ENCODE measurements at regions of chr20 and their contacts with region 1.

Region 1: GRCh38 chr20:50395258-50395729 is 114.9 kb upstream of the PTPN1 start:
- DNase-seq: peak; percentile 97 to 99
- ATAC-seq: peak; percentile 32 to 42
- H3K4me3 ChIP-seq: no peak overlapping the region
- H3K27ac ChIP-seq: peak overlapping the region; percentile 93 to 100 (median 96)
- H3K4me1 ChIP-seq: peaks cover 59 to 66% of the 10 kb centered on the region in 2 donors
- H3K27me3 ChIP-seq: no peaks in the 10 kb centered on the region
- CTCF ChIP-seq: peak in 1 of 5 experiments; percentile 20
- POLR2A ChIP-seq: peak; percentile 81 to 90

Region 2: GRCh38 chr20:50278674-50279531 is 116.4 kb before region 1 on chr20:
- in situ Hi-C with region 1: loop called in 1 of 4 experiments (anchors 25 kb)
- intact Hi-C with region 1: loop called (anchors 5 kb)
- DNase-seq: peak; percentile 91 to 98
- ATAC-seq: peak; percentile 79 to 85
- H3K4me3 ChIP-seq: no peak overlapping the region
- H3K27ac ChIP-seq: peak overlapping the region; percentile 87 to 96 (median 92)
- H3K4me1 ChIP-seq: peaks cover 43 to 50% of the 10 kb centered on the region in 2 donors
- H3K27me3 ChIP-seq: no peaks in the 10 kb centered on the region
- CTCF ChIP-seq: peak; percentile 46 to 54 (median 49)
- POLR2A ChIP-seq: peak; percentile 52 to 63

Region 3: GRCh38 chr20:50308513-50309279 is 86.6 kb before region 1 on chr20:
- in situ Hi-C with region 1: no loop called
- intact Hi-C with region 1: loop called (anchors 1 kb)
- DNase-seq: peak; percentile 79 to 87
- ATAC-seq: peak; percentile 19 to 27
- H3K4me3 ChIP-seq: no peak overlapping the region
- H3K27ac ChIP-seq: peak overlapping the region; percentile 87 to 95 (median 90)
- H3K4me1 ChIP-seq: peaks cover 49 to 53% of the 10 kb centered on the region in 2 donors
- H3K27me3 ChIP-seq: no peaks in the 10 kb centered on the region
- CTCF ChIP-seq: no peak
- POLR2A ChIP-seq: peak; percentile 53 to 67

Region 4: DNA sequence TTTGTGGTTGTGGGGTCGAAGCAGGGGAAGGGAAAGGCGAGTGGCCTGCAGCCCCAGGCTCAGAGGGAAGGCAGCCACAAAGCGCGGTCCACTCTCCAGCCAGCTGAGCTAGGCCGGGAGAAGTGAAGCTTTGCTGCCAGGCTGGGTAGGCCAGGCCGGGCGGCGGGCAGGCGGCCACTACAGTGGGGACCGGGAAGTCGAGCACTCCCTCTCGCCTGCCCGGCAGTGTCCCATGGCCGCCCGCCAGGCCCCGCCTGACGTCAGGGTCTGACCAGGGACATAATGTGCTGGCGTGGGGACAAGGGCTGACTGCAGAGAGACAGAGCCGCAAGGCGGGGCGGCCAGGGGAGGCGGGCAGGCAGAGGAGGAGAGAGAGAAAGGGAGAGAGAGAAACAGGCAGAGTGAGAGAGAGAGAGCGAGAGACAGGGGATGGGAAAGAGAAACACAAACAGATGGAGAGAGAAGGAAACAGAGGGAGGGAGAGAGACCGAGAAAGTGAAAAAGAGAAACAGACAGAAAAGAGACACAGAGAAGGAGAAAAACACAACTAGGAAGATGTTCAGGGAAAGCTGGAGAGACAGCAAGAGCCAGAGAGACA is 20.3 kb after region 1 on chr20:
- in situ Hi-C with region 1: no loop called
- intact Hi-C with region 1: loop called (anchors 1 kb)
- DNase-seq: peak; percentile 100
- ATAC-seq: peak; percentile 82 to 86
- H3K4me3 ChIP-seq: peak overlapping the region; percentile 15 to 28 (median 20)
- H3K27ac ChIP-seq: peak overlapping the region; percentile 99
- H3K4me1 ChIP-seq: peaks cover 47 to 54% of the 10 kb centered on the region in 2 donors
- H3K27me3 ChIP-seq: no peaks in the 10 kb centered on the region
- CTCF ChIP-seq: peak in 1 of 5 experiments; percentile 7
- POLR2A ChIP-seq: peak; percentile 83 to 93

Region 5: DNA sequence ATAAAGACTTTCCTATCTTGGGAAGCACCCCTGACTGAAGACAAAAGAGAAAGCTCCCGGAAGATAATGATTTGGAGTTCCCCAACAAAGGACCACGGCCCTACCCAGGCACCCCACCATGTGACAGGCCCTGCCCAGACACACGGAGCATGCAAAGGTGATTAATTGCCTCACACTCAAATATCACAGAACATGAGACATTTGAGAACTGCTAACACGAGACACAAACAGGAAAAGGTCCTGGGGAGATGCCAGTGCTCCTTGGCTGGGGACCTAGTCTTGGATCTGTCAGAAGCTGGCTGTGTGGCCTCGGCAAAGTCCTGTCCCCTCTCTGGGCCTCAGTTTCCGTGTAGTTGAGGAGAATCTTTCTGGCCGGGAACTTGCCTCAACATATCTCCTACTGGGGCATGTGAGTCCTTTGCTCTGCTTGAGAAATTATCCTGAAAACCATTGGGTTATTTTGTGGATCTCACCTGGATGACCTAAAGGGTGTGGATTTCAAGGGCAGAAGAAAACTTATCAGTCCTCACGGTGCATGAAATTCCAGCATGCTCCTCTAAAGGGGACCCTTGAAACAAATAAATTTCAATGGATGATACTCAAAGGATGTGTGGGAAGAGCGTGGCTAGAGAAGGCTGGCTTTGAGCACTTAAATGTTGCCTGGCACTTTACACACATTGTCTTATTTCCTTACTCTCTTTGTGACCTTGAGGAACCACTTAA is 32.6 kb after region 1 on chr20:
- in situ Hi-C with region 1: no loop called
- intact Hi-C with region 1: loop called (anchors 2 kb)
- DNase-seq: peak; percentile 91 to 96
- ATAC-seq: peak; percentile 86 to 88
- H3K4me3 ChIP-seq: no peak overlapping the region
- H3K27ac ChIP-seq: peak overlapping the region; percentile 83 to 99 (median 88)
- H3K4me1 ChIP-seq: peaks cover 37 to 41% of the 10 kb centered on the region in 2 donors
- H3K27me3 ChIP-seq: no peaks in the 10 kb centered on the region
- CTCF ChIP-seq: no peak
- POLR2A ChIP-seq: peak; percentile 69 to 71

Region 6: GRCh38 chr20:50575847-50576720 is 180.8 kb after region 1 on chr20:
- in situ Hi-C with region 1: no loop called
- intact Hi-C with region 1: loop called (anchors 2 kb)
- DNase-seq: peak; percentile 56 to 81
- ATAC-seq: peak; percentile 20 to 32
- H3K4me3 ChIP-seq: no peak overlapping the region
- H3K27ac ChIP-seq: peak overlapping the region; percentile 89 to 96 (median 92)
- H3K4me1 ChIP-seq: peaks cover 66 to 68% of the 10 kb centered on the region in 2 donors
- H3K27me3 ChIP-seq: no peaks in the 10 kb centered on the region
- CTCF ChIP-seq: peak; percentile 54 to 84 (median 78)
- POLR2A ChIP-seq: no peak